Activated T-helper 1 cell treated with anti-CD3 and anti-CD28 coated beads, Interleukin-12 subunit alpha, Interleukin-12 subunit beta, Interleukin-2, Interleukin-4 antibody, amounts not matched to agents 30 ng/mL and 10 ng/mL and 1 ng/mL, durations not matched to agents 14 hours and 24 hours and 36 hours (primary cell): ENCODE measurements at regions of chr7 and their contacts with region 1.

Region 1: DNA sequence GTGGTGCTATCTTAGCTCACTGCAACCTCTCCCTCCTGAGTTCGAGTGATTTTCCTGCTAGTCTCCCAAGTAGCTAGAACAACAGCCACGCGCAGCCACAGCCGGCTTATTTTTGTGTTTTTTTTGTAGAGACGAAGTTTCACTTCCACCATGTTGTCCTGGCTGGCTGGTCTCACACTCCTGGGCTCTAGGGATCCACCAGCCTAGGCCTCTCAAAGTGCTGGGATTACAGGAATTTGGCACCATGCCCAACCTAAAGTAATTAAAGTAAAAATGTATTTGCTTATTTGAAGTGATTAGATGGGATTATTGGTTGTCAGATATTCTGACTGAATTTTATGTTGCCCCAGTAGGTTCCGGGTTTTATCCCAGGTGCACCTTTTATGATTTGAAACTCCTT is 22.7 kb downstream of the LUC7L2 start:
- DNase-seq: no peak
- H3K4me3 Mint-ChIP-seq: no peak overlapping the region
- H3K27ac Mint-ChIP-seq: no peak overlapping the region
- H3K4me1 Mint-ChIP-seq: no peaks in the 10 kb centered on the region
- H3K27me3 Mint-ChIP-seq: no peaks in the 10 kb centered on the region

Region 2: DNA sequence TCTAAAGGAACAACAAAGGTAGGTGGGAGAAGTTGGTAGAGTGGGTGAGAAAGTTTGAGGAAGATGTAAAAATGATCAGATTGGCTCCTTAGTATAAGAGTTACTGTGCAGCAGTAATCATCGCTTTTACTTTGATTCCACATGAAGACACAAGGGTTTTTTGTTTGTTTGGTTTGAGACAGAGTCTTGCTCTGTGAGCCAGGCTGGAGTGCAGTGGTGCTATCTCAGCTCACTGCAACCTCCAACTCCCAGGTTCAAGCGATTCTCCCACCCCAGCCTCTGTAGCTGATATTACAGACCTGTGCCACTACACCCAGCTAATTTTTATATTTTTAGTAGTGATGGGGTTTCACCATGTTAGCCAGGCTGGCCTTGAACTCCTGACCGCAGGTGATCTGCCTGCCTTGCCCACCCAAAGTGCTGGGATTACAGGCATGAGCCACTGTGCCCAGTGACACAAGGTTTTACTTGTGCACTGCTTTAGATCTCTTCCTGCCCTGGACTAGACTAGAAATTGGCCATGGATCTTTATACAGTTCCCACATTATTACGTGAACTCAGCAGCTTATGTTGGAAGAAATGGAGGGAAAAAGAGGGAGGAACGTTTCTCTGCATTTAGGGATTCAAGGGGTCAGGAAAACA is 12.0 kb before region 1 on chr7:
- intact Hi-C with region 1: loop called (anchors 2 kb)
- DNase-seq: no peak
- H3K4me3 Mint-ChIP-seq: no peak overlapping the region
- H3K27ac Mint-ChIP-seq: peak overlapping the region; percentile 56
- H3K4me1 Mint-ChIP-seq: peaks cover 43% of the 10 kb centered on the region
- H3K27me3 Mint-ChIP-seq: no peaks in the 10 kb centered on the region

Region 3: DNA sequence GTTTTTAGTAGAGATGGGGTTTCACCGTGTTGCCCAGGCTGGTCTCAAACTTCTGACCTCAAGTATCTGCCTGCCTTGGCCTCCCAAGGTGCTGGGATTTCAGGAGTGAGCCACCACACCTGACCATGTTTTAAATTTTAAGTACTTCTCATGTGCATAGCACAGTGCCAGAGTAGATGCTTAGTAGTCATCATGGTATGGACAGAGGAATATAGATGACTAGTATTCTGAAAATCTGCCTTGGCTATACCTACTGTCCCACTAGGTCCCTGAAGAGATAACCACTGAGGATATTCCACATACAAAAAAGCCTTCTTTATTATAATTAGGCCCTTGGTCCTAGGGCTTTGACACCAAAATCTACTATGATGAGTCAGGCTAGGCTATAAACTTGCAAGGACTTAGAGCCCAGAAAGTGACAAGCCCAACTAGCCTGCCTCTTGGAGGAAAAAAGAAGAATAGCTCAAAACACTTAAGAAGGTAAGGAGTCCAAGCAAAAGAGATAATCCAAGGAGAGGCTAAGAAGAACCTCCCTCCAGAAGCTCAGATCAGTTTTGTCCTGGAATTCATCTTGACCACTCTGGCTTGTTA is 11.3 kb after region 1 on chr7:
- intact Hi-C with region 1: loop called (anchors 2 kb)
- DNase-seq: no peak
- H3K4me3 Mint-ChIP-seq: no peak overlapping the region
- H3K27ac Mint-ChIP-seq: no peak overlapping the region
- H3K4me1 Mint-ChIP-seq: peaks cover 37% of the 10 kb centered on the region
- H3K27me3 Mint-ChIP-seq: no peaks in the 10 kb centered on the region